K562 (cell line): ENCODE measurements at regions of chr7 and their contacts with region 1.

Region 1: GRCh38 chr7:28926871-28927597 is 31.1 kb downstream of the TRIL start:
- DNase-seq: peak; percentile 41 to 70 (median 46)
- ATAC-seq: peak; percentile 93
- H3K4me3 ChIP-seq: peak overlapping the region; percentile 21; the same call in 1 of the 2 replicates
- H3K27ac ChIP-seq: no peak overlapping the region
- H3K4me1 ChIP-seq: no peaks in the 10 kb centered on the region
- H3K27me3 ChIP-seq: peaks cover 0 to 7% of the 10 kb centered on the region in 2 experiments; a peak in 3 of 5 replicates
- CTCF ChIP-seq: peak; percentile 56 to 84 (median 79); a peak in 5 of 6 replicates
- EP300 ChIP-seq: no peak
- POLR2A ChIP-seq: no peak
- RAD21 ChIP-seq: peak; percentile 53 to 73

Region 2: GRCh38 chr7:28661826-28662595 is 265.0 kb before region 1 on chr7:
- CTCF ChIA-PET with region 1: no interaction called
- POLR2A ChIA-PET with region 1: no interaction called
- in situ Hi-C with region 1: no loop called
- intact Hi-C with region 1: no loop called
- DNase-seq: no peak
- ATAC-seq: no peak
- H3K4me3 ChIP-seq: no peak overlapping the region
- H3K27ac ChIP-seq: no peak overlapping the region
- H3K4me1 ChIP-seq: no peaks in the 10 kb centered on the region
- H3K27me3 ChIP-seq: no peaks in the 10 kb centered on the region
- CTCF ChIP-seq: no peak
- EP300 ChIP-seq: no peak
- POLR2A ChIP-seq: no peak
- RAD21 ChIP-seq: no peak

Region 3: DNA sequence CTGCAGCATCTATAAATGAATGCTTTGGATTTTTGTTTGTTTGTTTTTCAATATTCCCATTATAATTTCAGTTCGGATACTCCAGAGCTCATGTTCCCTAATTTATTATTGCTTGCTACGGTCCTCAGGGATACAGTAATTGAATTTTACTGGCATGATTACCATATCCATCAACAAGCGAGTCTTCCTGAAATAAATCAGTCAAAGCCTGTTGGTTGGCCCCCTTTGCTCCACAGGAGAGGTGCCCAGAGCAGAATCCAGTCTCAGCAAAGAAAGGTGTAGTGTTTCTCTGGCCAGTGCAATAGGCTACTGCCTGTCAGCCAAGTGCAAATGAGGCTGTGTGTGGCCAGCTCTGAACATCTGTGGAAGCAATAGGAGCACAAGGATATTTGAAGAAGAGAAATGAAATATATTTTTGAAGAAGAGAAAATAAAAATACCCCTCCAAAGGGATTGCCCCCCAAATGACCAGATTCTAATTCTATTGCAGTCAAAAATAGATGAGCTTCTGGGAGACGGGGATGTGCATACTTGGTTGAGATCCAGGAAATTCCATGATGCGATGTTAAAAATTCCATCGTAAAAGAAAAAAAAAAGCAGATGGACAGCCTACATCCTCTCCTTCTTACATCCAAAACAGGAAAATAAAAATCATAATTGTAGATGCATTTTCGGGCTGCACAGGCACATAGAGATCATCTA is 13.0 kb after region 1 on chr7:
- CTCF ChIA-PET with region 1: no interaction called
- POLR2A ChIA-PET with region 1: no interaction called
- in situ Hi-C with region 1: no loop called
- intact Hi-C with region 1: no loop called
- DNase-seq: no peak
- ATAC-seq: no peak
- H3K4me3 ChIP-seq: no peak overlapping the region
- H3K27ac ChIP-seq: no peak overlapping the region
- H3K4me1 ChIP-seq: no peaks in the 10 kb centered on the region; a peak in 1 of 5 replicates
- H3K27me3 ChIP-seq: peaks cover 0 to 4% of the 10 kb centered on the region in 2 experiments; a peak in 1 of 5 replicates
- CTCF ChIP-seq: no peak
- EP300 ChIP-seq: no peak
- POLR2A ChIP-seq: no peak
- RAD21 ChIP-seq: no peak

Region 4: GRCh38 chr7:29105752-29106668 is 179.0 kb after region 1 on chr7:
- CTCF ChIA-PET with region 1: interaction called, 25 read pairs
- POLR2A ChIA-PET with region 1: no interaction called
- in situ Hi-C with region 1: loop called (anchors 5 kb)
- intact Hi-C with region 1: loop called (anchors 1 kb)
- DNase-seq: peak in 1 of 4 experiments; percentile 46
- ATAC-seq: peak; percentile 84
- H3K4me3 ChIP-seq: no peak overlapping the region
- H3K27ac ChIP-seq: no peak overlapping the region
- H3K4me1 ChIP-seq: no peaks in the 10 kb centered on the region
- H3K27me3 ChIP-seq: no peaks in the 10 kb centered on the region
- CTCF ChIP-seq: peak; percentile 62 to 79 (median 63)
- EP300 ChIP-seq: no peak
- POLR2A ChIP-seq: no peak
- RAD21 ChIP-seq: peak; percentile 51 to 66

Region 5: GRCh38 chr7:29424295-29424983 is 497.4 kb after region 1 on chr7:
- CTCF ChIA-PET with region 1: no interaction called
- POLR2A ChIA-PET with region 1: no interaction called
- in situ Hi-C with region 1: no loop called
- intact Hi-C with region 1: no loop called
- DNase-seq: no peak
- ATAC-seq: no peak
- H3K4me3 ChIP-seq: no peak overlapping the region
- H3K27ac ChIP-seq: no peak overlapping the region
- H3K4me1 ChIP-seq: no peaks in the 10 kb centered on the region
- H3K27me3 ChIP-seq: peaks cover 4 to 11% of the 10 kb centered on the region in 2 experiments; a peak in 3 of 5 replicates
- CTCF ChIP-seq: no peak
- EP300 ChIP-seq: no peak
- POLR2A ChIP-seq: no peak
- RAD21 ChIP-seq: no peak

Region 6: DNA sequence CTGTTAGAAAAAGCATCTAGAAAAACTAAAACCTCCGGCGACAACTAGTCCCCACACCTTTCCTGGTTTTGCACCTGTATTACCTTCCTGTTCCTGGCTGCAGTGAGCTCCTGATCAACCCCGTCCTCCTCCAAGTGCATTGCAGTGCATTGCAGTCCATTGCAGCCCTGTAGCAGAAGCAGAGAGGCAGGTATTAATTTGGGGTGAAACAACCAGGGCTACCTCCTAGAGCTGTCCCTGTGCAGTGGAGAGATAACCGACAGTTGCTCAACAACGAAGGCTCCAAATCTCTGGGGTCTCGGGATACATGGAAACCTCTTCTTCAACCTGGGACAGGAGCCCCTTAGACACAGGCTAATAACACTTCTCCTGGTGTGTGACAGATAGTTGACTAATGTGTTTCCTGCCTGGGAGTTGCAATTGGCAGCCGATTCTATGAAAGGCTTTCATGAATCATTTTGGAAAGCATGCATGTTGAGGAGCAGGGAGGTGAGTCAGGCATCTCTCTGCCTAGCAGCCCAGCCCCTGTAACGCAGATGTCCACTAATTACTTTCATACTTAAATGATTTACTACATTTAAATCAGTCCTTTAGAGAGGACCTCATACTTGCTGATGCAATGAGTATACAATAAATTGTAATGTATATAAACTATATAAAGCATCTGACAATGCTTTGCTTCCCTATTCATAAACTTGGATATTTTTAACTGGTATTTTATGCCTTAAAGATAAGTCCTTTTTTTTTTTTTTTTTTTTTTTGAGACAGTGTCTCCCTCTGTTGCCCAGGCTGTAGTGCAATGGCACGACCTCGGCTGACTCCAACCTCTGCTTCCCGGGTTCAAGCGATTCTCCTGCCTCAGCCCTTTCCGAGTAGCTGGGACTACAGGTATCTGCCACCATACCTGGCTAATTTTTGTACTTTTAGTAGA is 695.6 kb after region 1 on chr7:
- CTCF ChIA-PET with region 1: no interaction called
- POLR2A ChIA-PET with region 1: no interaction called
- in situ Hi-C with region 1: no loop called
- intact Hi-C with region 1: loop called (anchors 10 kb)
- DNase-seq: peak in 2 of 4 experiments; percentile 16 to 31
- ATAC-seq: peak; percentile 80
- H3K4me3 ChIP-seq: no peak overlapping the region
- H3K27ac ChIP-seq: no peak overlapping the region; the same call in 2 of the 3 replicates
- H3K4me1 ChIP-seq: peaks cover 0 to 6% of the 10 kb centered on the region in 2 experiments; a peak in 1 of 5 replicates
- H3K27me3 ChIP-seq: peaks cover 3 to 16% of the 10 kb centered on the region in 2 experiments; a peak in 3 of 5 replicates
- CTCF ChIP-seq: no peak
- EP300 ChIP-seq: no peak
- POLR2A ChIP-seq: no peak
- RAD21 ChIP-seq: no peak